Right ventricle myocardium inferior (tissue), 1 donor: ENCODE measurements at regions of chr12 and their contacts with region 1.

Region 1: DNA sequence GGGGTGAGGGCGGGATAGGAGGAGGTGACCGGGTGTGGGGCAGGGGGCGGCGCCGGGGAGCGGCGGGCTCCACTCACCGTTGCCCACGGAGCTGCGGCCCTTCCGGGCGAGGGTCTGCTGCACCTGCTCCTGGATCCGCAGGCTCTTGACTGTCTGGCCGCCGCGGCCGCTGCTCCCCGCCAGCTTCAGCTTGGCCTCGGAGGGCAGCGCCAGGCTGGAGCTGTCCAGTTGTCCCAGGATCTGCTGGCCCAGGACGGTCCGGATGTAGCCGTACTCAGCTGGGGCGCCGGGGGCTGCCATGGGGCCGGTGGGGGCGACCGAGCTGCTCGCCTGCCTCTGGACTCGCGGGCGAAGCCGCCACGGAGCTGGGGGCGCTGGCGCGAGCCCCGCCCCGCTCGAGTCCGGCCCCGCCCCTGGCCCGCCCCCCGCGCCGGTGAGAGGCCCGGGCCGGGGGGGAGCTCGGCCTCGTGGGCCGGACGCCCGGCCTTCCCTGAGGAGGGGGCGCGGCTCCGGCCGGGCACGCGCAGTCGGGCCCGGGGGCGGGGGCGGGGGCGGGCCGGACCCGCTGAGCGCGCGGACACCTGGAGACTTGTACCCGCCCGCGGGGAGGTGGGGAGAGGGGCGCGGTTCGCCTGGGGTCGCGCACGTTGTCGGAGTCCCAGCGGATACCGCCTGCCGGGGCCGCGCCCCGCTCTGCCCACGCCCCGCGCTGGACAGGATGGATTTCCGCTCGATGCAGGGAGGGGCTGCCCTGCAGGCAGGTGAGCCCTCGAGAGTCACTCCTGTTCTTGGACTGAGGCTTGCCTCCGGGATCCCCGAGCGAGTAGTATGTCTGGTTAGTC is at the start of gene PKP2:
- DNase-seq: peak; percentile 75
- ATAC-seq: peak; percentile 85
- total RNA-seq, gene PKP2: 378 TPM

Region 2: GRCh38 chr12:32780071-32780470 is 116.6 kb before region 1 on chr12:
- intact Hi-C with region 1: loop called (anchors 10 kb)
- DNase-seq: no peak
- ATAC-seq: no peak

Region 3: DNA sequence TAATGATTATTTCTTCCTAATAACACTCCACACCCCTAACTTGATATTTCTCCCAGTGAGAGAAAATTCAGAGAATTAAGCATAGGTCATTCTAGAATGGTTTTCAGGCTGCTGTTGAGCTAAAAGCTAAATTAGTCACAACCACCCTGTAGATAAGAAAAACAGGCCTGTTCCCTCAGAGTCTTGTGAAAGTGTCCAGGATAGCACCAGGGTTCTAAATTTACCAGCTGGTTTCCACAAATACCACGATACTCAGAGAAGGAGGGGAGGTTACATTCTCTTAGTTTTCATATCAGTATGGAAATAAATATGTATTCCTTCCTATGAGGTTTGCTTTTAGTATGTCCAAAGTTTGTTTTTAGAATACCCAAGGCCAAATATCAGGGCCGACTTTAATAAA is 74.9 kb before region 1 on chr12:
- intact Hi-C with region 1: loop called (anchors 1 kb)
- DNase-seq: no peak
- ATAC-seq: peak; percentile 83

Region 4: DNA sequence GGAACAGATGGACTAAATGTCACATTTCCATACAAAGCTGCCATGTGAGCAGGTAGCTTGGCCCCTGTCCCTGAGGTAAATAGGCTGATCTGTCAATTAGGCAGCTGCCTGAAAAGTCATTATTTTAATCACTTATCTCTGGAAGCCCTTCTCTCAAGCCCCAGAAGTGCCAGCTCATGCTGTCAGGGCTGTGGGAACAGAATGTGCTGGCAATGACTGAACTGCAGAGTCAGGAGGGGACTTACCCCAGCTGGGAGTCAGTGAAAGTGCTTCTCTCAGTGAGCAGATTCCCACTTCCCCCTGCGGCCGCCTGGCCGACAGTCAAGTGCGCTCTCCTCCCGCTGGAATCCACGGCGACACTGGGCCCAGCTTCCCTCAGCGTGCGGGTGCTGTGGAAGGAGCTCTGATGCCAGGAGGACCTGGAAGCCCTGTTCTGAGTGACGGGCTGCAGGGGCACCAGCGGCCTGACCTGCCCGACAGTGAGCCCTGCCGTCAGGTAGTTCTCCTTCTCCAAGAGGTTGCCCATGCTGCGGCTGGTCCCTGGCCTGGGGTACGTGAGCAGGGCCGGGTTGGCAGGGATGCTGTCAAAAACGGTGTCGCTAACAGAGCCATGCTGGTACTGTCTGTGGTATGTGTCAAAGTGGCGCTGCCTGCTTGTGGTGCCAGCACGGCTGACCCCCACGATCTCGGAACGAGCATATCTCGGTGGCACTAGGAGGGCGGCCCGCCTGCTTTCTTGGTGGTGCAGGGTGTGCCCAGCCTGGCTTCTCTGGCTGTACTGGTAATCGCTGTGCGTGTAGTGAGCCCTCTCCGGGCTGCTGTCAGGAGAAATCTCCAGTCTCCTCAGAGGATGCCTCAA is 18.8 kb before region 1 on chr12:
- intact Hi-C with region 1: loop called (anchors 1 kb)
- DNase-seq: peak; percentile 84
- ATAC-seq: peak; percentile 89

Region 5: DNA sequence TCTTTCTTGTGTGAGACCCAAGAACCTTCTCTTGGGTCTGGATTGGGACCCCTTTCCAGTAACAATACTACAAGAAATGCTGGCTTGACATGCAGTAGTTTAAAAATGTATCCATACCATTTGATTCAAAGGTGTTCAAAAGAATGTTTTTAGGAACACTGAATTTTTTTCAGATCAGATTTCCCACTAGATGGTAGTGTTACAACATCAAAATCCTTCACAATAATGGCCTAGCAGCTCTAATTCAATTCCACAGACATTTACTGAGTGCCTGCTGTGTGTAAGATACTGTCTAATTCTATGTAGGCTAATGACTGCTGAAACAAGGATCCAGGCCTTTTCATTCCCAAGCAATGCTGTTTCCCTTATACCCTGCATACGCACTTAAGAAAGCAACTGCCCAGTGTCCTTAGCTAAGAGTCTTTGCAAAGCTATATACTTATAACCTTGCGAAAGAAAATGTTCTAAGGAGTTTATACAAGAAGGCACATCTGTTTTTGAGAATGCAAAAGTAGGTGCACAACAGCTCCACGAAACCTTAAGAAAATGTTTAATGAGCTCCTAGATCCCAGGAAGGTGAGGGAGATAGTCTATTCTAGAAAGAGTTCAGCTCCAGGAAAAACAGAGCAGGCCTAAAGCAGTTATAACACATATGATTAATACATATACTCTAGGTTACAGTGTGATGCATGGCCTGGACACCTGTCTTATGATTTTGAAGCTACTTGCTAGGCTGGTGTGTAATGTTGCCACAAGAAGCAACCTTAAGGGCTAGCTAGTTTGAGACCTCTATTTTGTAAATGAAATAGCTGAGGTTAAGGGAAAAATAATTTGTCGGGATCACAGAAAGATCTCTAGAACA is 50.8 kb after region 1 on chr12:
- intact Hi-C with region 1: no loop called
- DNase-seq: no peak
- ATAC-seq: no peak